ENCODE measurements at regions of chr9 and their contacts with region 1.

Region 1: DNA sequence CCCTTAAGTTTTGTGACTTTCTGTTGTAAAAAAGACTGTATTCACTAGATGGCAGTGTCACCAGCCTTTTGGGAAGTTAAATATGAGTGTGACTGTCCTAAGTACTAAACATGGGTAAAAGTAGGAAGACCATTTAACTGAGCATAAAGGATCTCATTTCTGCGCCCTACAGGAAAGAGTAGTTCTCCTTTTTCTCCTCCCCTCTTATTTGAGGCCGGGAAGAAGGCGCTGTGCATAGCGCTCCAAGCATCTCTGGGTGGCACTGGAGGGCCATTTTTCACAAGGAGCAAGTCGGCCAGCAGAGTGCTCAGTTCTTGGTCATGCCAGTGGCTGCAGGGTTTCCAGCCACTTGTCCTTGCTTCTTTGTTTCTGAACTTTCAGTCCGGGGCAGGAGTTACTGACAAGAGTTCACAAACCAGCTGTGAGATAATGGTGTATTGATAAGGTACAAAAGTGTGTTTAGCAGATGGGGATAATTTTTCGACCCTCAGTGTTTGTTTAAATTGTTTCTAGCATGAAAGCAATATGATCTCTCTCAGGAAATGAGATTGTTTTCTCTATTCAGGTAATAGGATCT is 227.6 kb upstream of the DMRT1 start:
- DNase-seq: peak; percentile 58 to 79 (median 70)
- ATAC-seq: peak; percentile 91 to 97 (median 96)
- H3K4me3 ChIP-seq: no peak overlapping the region
- H3K27ac ChIP-seq: peak overlapping the region in 2 of 4 donors; percentile 30 to 64
- H3K4me1 ChIP-seq: peaks cover 12 to 21% (median 16%) of the 10 kb centered on the region in 3 donors
- H3K27me3 ChIP-seq: no peaks in the 10 kb centered on the region
- CTCF ChIP-seq: peak in 3 of 4 donors; percentile 55 to 73 (median 69)

Region 2: DNA sequence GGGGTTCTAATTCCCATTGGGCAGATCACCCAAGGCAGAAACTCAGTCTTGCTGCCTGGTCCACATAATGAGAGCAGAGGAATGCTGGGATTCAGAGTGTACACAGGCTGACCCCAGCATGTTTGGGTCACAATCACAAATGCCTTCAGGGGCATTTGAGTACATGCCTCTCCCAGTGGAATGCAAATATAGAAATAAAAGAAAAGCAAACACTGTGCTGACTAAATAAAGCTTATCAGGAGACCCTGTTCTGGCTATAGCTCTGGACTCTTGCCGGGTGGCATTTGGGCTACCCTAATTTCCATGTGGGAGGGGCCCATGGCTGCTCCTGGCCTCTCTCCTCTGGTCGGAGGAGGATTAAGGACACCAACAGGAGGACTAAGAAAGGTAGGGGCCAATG is 277.8 kb before region 1 on chr9:
- intact Hi-C with region 1: no loop called
- DNase-seq: peak in 3 of 6 donors; percentile 25 to 34 (median 30)
- ATAC-seq: peak in 3 of 4 donors; percentile 73 to 91 (median 79)
- H3K4me3 ChIP-seq: no peak overlapping the region
- H3K27ac ChIP-seq: no peak overlapping the region
- H3K4me1 ChIP-seq: peaks cover 0 to 9% (median 3%) of the 10 kb centered on the region in 3 donors
- H3K27me3 ChIP-seq: no peaks in the 10 kb centered on the region
- CTCF ChIP-seq: no peak

Region 3: DNA sequence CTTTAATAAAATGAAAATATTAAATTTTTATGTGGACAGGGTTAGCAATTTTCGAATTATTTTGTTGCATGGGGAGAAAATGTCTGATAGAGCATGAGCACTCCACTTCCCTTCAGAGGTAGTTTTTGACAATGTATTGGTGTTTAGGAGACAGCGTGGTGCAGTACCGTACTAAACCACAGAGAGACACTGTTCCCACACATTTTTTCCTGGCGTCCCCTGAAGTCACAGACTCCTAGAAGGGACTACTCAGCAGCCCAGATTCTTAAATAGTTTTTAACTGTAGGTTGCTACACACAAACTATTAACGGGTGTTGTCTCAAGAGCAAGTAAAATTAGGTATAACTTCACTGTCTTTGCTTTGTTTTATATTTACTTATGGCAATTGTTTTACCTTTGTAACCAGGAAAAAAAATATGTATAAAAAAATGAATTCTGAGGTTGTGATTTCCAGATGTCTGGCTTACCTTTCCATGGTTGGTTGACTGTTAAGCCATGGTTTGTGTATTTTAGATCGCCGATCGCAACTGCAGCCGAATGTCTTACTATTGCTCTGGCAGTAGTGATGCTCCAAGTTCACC is 228.0 kb before region 1 on chr9:
- intact Hi-C with region 1: loop called in 1 of 3 experiments (anchors 10 kb)
- DNase-seq: peak in 3 of 6 donors; percentile 24 to 79 (median 28)
- ATAC-seq: peak; percentile 90 to 98 (median 96)
- H3K4me3 ChIP-seq: no peak overlapping the region
- H3K27ac ChIP-seq: no peak overlapping the region
- H3K4me1 ChIP-seq: no peaks in the 10 kb centered on the region
- H3K27me3 ChIP-seq: no peaks in the 10 kb centered on the region
- CTCF ChIP-seq: peak; percentile 83 to 86 (median 83)

Region 4: GRCh38 chr9:763692-764524 is 150.0 kb after region 1 on chr9:
- intact Hi-C with region 1: loop called in 1 of 3 experiments (anchors 10 kb)
- DNase-seq: peak; percentile 47 to 78 (median 65)
- ATAC-seq: peak; percentile 90 to 98 (median 97)
- H3K4me3 ChIP-seq: no peak overlapping the region
- H3K27ac ChIP-seq: no peak overlapping the region
- H3K4me1 ChIP-seq: peaks cover 0 to 14% (median 8%) of the 10 kb centered on the region in 3 donors
- H3K27me3 ChIP-seq: no peaks in the 10 kb centered on the region
- CTCF ChIP-seq: peak; percentile 63 to 85 (median 80)

Region 5: GRCh38 chr9:806285-807156 is 192.7 kb after region 1 on chr9:
- intact Hi-C with region 1: loop called in 1 of 3 experiments (anchors 5 kb)
- DNase-seq: no peak
- ATAC-seq: peak in 3 of 4 donors; percentile 71 to 77 (median 72)
- H3K4me3 ChIP-seq: no peak overlapping the region
- H3K27ac ChIP-seq: no peak overlapping the region
- H3K4me1 ChIP-seq: no peaks in the 10 kb centered on the region
- H3K27me3 ChIP-seq: no peaks in the 10 kb centered on the region
- CTCF ChIP-seq: peak; percentile 21 to 61 (median 54)

Measured in pancreas (tissue), 10 donors.